WTC11 (cell line): ENCODE measurements at regions of chr19 and their contacts with region 1.

Region 1: GRCh38 chr19:13861732-13862531 is 15.0 kb upstream of the NANOS3 start:
- DNase-seq: peak; percentile 95
- ATAC-seq: peak; percentile 79
- H3K4me3 Mint-ChIP-seq: peak overlapping the region; percentile 75
- H3K27ac Mint-ChIP-seq: no peak overlapping the region; the same call in 1 of the 2 replicates
- H3K4me1 Mint-ChIP-seq: peaks cover 13% of the 10 kb centered on the region
- H3K27me3 Mint-ChIP-seq: peaks cover 42% of the 10 kb centered on the region
- CTCF ChIP-seq: peak; percentile 99

Region 2: GRCh38 chr19:13774217-13775191 is 87.4 kb before region 1 on chr19 and contains the start of gene C19orf53:
- CTCF ChIA-PET with region 1: interaction called, 10 read pairs
- POLR2A ChIA-PET with region 1: interaction called, 9 read pairs
- DNase-seq: peak; percentile 86
- ATAC-seq: peak; percentile 98
- H3K4me3 Mint-ChIP-seq: peak within 1 kb of the TSS; percentile 99
- H3K27ac Mint-ChIP-seq: peak within 1 kb of the TSS; percentile 99
- H3K4me1 Mint-ChIP-seq: peaks cover 16% of the 10 kb centered on the region
- H3K27me3 Mint-ChIP-seq: no peaks in the 10 kb centered on the region
- CTCF ChIP-seq: no peak
- total RNA-seq, gene C19orf53: 102 to 112 TPM (median 110 TPM) in 3 replicates

Region 3: GRCh38 chr19:13804830-13805683 is 56.9 kb before region 1 on chr19:
- CTCF ChIA-PET with region 1: interaction called, 80 read pairs
- POLR2A ChIA-PET with region 1: interaction called, 10 read pairs
- DNase-seq: peak; percentile 79
- ATAC-seq: peak; percentile 98
- H3K4me3 Mint-ChIP-seq: no peak overlapping the region
- H3K27ac Mint-ChIP-seq: peak overlapping the region; percentile 27; the same call in 1 of the 2 replicates
- H3K4me1 Mint-ChIP-seq: peaks cover 6% of the 10 kb centered on the region; the same call in 1 of the 2 replicates
- H3K27me3 Mint-ChIP-seq: no peaks in the 10 kb centered on the region
- CTCF ChIP-seq: peak; percentile 39; the same call in 1 of the 2 replicates

Region 4: GRCh38 chr19:13833330-13834243 is 28.3 kb before region 1 on chr19:
- CTCF ChIA-PET with region 1: interaction called, 24 read pairs
- POLR2A ChIA-PET with region 1: interaction called, 4 read pairs
- DNase-seq: peak; percentile 99
- ATAC-seq: peak; percentile 96
- H3K4me3 Mint-ChIP-seq: peak overlapping the region; percentile 81
- H3K27ac Mint-ChIP-seq: peak overlapping the region; percentile 84
- H3K4me1 Mint-ChIP-seq: peaks cover 12% of the 10 kb centered on the region
- H3K27me3 Mint-ChIP-seq: no peaks in the 10 kb centered on the region
- CTCF ChIP-seq: peak; percentile 22; the same call in 1 of the 2 replicates

Region 5: DNA sequence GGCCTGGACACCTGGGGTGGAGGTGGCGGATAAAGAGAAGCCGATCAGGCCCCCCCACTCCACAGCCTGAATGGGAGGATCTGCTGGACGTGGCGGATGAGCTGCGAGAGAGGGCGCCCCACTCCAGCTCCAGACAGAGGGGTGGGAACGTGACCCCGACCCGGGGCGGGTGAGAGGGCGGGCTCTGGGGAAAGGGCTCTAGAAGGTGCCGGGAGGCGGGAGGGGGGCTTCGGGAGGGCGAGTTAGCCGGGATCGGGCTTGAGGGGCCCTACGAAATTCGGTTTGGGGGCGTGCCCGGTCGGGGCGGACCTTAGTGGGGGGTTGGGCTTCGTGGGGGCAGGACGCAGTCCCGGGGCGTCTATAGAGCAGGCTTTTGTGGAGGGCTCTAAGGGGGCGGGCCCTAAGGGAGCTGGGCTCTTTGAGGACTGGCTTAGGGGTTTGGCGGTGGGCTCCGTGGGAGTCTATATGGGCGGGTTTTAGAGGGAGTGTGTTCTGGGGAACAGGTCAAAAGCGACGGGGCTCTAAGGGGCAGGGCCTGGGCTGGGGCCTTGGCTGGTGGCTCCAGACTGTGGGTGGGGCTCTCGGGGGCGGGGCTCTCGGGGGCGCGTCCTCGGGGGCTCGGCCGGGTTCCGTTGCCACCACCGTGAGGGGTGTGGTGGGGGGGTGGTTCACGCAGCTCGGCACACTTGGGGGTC is 10.9 kb after region 1 on chr19:
- CTCF ChIA-PET with region 1: interaction called, 27 read pairs
- POLR2A ChIA-PET with region 1: no interaction called
- DNase-seq: peak; percentile 89
- ATAC-seq: peak; percentile 97
- H3K4me3 Mint-ChIP-seq: peak overlapping the region; percentile 56
- H3K27ac Mint-ChIP-seq: no peak overlapping the region
- H3K4me1 Mint-ChIP-seq: peaks cover 7% of the 10 kb centered on the region
- H3K27me3 Mint-ChIP-seq: peaks cover 98% of the 10 kb centered on the region
- CTCF ChIP-seq: no peak